GM12878 (cell line): ENCODE measurements at regions of chr2 and their contacts with region 1.

Region 1: DNA sequence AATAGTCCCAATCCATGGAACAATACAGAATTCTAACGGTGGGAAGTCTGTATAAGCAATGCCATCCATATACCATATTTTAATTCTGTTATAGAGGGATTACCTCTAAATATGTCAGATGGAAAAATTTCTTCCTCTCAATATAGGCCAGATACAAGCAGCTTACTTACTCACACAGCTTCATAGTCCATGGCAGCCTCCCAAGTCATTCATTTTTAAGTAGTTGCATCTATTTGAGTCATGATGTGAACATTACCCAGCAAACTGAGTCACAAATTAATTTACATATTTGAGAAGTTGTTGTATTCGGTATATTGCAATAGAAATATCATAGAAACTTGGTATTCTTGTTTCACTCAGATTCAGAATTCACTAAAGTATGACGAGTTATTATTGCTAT is 20.3 kb downstream of the TBR1 start:
- DNase-seq: no peak
- ATAC-seq: no peak
- H3K4me3 ChIP-seq: no peak overlapping the region
- H3K27ac ChIP-seq: no peak overlapping the region
- H3K4me1 ChIP-seq: no peaks in the 10 kb centered on the region
- H3K27me3 ChIP-seq: no peaks in the 10 kb centered on the region
- CTCF ChIP-seq: no peak
- EP300 ChIP-seq: no peak
- POLR2A ChIP-seq: no peak
- RAD21 ChIP-seq: no peak

Region 2: GRCh38 chr2:161631855-161632391 is 195.5 kb after region 1 on chr2:
- CTCF ChIA-PET with region 1: no interaction called
- POLR2A ChIA-PET with region 1: no interaction called
- RAD21 ChIA-PET with region 1: no interaction called
- SMC1A ChIA-PET with region 1: no interaction called
- in situ Hi-C with region 1: no loop called
- intact Hi-C with region 1: no loop called
- DNase-seq: no peak
- ATAC-seq: no peak
- H3K4me3 ChIP-seq: no peak overlapping the region
- H3K27ac ChIP-seq: no peak overlapping the region
- H3K4me1 ChIP-seq: no peaks in the 10 kb centered on the region
- H3K27me3 ChIP-seq: no peaks in the 10 kb centered on the region
- CTCF ChIP-seq: no peak
- EP300 ChIP-seq: no peak
- POLR2A ChIP-seq: no peak
- RAD21 ChIP-seq: no peak

Region 3: GRCh38 chr2:162623888-162624287 is 1187.5 kb after region 1 on chr2:
- CTCF ChIA-PET with region 1: no interaction called
- POLR2A ChIA-PET with region 1: no interaction called
- RAD21 ChIA-PET with region 1: no interaction called
- SMC1A ChIA-PET with region 1: no interaction called
- in situ Hi-C with region 1: no loop called
- intact Hi-C with region 1: loop called (anchors 5 kb)
- DNase-seq: no peak
- ATAC-seq: no peak
- H3K4me3 ChIP-seq: no peak overlapping the region
- H3K27ac ChIP-seq: no peak overlapping the region
- H3K4me1 ChIP-seq: no peaks in the 10 kb centered on the region
- H3K27me3 ChIP-seq: no peaks in the 10 kb centered on the region
- CTCF ChIP-seq: no peak
- EP300 ChIP-seq: no peak
- POLR2A ChIP-seq: no peak
- RAD21 ChIP-seq: no peak